WTC11 (cell line): ENCODE measurements at regions of chr2 and their contacts with region 1.

Region 1: DNA sequence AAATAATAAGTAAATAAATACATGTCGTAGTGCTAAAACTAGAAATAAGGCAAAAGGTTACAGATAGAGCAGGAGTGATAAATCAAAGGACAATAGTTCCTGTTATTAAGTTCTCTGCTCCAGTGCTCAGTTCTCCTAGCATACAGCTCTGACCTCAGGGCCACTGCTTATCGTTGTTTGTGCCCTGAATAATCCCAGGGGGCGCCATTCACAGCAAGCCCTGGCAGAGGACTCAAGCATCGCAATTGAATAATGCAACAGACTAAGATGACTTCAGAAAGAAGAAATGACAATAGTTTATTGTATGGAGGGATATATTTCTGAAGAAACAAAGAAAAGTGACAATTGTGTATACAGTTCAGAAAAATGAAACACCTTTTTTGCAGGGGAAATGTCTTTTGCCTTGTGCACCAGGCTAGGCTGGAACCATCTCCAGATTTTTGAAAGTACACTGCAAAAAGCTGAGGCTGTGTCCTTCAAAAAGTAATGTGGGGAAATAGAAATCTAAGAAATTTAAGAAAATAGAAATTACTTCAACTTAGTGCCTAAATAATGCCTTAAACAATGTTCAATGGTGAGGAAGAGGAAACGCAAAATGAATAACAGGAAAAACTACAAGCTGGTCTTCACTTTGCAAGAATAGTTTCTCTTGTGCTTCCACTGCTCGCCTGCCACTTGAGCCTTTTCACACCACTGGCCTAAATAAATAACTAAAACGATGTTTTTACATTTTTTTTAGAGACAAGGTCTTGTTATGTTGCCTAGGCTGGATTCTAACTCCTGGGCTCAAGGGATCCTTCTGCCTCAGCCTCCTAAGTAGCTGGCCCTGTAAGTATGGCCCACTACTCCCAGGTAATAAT is 19.0 kb upstream of the CCNYL1 start:
- DNase-seq: peak; percentile 55
- ATAC-seq: peak; percentile 95
- H3K4me3 Mint-ChIP-seq: no peak overlapping the region
- H3K27ac Mint-ChIP-seq: no peak overlapping the region
- H3K4me1 Mint-ChIP-seq: 0 out of 2 replicates have a peak, but pooled peaks cover 3% of the 10 kb centered on the region
- H3K27me3 Mint-ChIP-seq: no peaks in the 10 kb centered on the region
- CTCF ChIP-seq: peak; percentile 39; the same call in 1 of the 2 replicates

Region 2: DNA sequence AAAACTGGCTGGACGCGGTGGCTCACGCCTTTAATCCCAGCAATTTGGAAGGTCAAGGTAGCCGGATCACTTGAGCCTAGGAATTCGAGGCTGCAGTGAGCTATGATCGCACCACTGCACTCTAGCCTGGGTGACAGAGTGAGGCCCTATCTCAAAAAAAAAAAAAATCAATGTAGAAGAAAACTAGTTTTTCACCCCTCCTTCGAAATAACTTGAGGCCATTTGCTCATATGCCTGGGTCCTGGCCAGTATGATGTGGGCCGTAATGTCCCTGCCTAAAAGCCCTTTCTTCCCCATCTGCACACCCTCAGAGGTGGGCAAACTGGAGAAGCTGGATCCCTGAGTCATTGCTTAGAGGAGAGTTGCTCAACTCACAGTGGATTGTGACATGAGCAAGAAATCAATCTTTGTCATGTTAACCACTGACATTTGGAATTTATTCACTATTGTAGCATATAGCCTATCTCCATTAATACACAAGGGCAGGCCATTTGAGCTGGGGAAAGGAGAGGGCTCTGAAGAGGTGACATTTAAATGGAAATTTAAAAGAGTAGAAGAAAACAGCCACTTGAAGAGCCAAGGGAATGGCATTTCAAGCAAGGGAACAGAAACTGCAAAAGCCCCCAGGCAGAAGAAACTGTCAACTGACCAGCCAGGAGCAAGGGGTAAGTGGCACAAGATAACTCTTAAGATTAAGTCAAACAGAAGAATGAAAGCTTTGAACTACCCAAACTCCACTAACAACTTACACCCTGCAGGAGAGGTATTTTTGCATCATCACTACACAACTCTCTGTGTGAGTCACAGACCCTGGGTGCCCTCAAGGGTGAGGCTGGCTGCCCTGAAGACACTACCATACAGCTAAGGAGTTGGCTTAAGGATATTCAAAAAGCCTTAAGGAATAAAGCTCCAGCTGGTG is 59.6 kb before region 1 on chr2:
- CTCF ChIA-PET with region 1: interaction called, 39 read pairs
- POLR2A ChIA-PET with region 1: no interaction called
- DNase-seq: no peak
- ATAC-seq: peak; percentile 34; the same call in 1 of the 2 replicates
- H3K4me3 Mint-ChIP-seq: no peak overlapping the region
- H3K27ac Mint-ChIP-seq: peak overlapping the region; percentile 78; the same call in 1 of the 2 replicates
- H3K4me1 Mint-ChIP-seq: peaks cover 22% of the 10 kb centered on the region
- H3K27me3 Mint-ChIP-seq: no peaks in the 10 kb centered on the region
- CTCF ChIP-seq: no peak

Region 3: GRCh38 chr2:207704078-207704477 is 11.6 kb after region 1 on chr2:
- CTCF ChIA-PET with region 1: interaction called, 22 read pairs
- POLR2A ChIA-PET with region 1: no interaction called
- DNase-seq: no peak
- ATAC-seq: no peak
- H3K4me3 Mint-ChIP-seq: no peak overlapping the region
- H3K27ac Mint-ChIP-seq: no peak overlapping the region
- H3K4me1 Mint-ChIP-seq: peaks cover 9% of the 10 kb centered on the region
- H3K27me3 Mint-ChIP-seq: no peaks in the 10 kb centered on the region
- CTCF ChIP-seq: no peak

Region 4: GRCh38 chr2:207710814-207711740 is 18.6 kb after region 1 on chr2 and contains the start of gene CCNYL1:
- CTCF ChIA-PET with region 1: interaction called, 15 read pairs
- POLR2A ChIA-PET with region 1: interaction called, 4 read pairs
- DNase-seq: peak; percentile 99
- ATAC-seq: peak; percentile 98
- H3K4me3 Mint-ChIP-seq: peak within 1 kb of the TSS; percentile 99
- H3K27ac Mint-ChIP-seq: peak within 1 kb of the TSS; percentile 94
- H3K4me1 Mint-ChIP-seq: peaks cover 27% of the 10 kb centered on the region
- H3K27me3 Mint-ChIP-seq: no peaks in the 10 kb centered on the region
- CTCF ChIP-seq: no peak
- total RNA-seq, gene CCNYL1: 26.6 to 31.6 TPM (median 28.1 TPM) in 3 replicates

Region 5: GRCh38 chr2:207720517-207721208 is 28.2 kb after region 1 on chr2:
- CTCF ChIA-PET with region 1: interaction called, 13 read pairs
- POLR2A ChIA-PET with region 1: no interaction called
- DNase-seq: no peak
- ATAC-seq: no peak
- H3K4me3 Mint-ChIP-seq: no peak overlapping the region
- H3K27ac Mint-ChIP-seq: peak overlapping the region; percentile 75; the same call in 1 of the 2 replicates
- H3K4me1 Mint-ChIP-seq: peaks cover 11% of the 10 kb centered on the region
- H3K27me3 Mint-ChIP-seq: no peaks in the 10 kb centered on the region
- CTCF ChIP-seq: no peak

Region 6: GRCh38 chr2:207746131-207746530 is 53.7 kb after region 1 on chr2:
- CTCF ChIA-PET with region 1: interaction called, 10 read pairs
- POLR2A ChIA-PET with region 1: no interaction called
- DNase-seq: peak; percentile 55
- ATAC-seq: peak; percentile 82
- H3K4me3 Mint-ChIP-seq: no peak overlapping the region
- H3K27ac Mint-ChIP-seq: peak overlapping the region; percentile 31; the same call in 1 of the 2 replicates
- H3K4me1 Mint-ChIP-seq: peaks cover 16% of the 10 kb centered on the region
- H3K27me3 Mint-ChIP-seq: no peaks in the 10 kb centered on the region
- CTCF ChIP-seq: peak; percentile 83

Region 7: DNA sequence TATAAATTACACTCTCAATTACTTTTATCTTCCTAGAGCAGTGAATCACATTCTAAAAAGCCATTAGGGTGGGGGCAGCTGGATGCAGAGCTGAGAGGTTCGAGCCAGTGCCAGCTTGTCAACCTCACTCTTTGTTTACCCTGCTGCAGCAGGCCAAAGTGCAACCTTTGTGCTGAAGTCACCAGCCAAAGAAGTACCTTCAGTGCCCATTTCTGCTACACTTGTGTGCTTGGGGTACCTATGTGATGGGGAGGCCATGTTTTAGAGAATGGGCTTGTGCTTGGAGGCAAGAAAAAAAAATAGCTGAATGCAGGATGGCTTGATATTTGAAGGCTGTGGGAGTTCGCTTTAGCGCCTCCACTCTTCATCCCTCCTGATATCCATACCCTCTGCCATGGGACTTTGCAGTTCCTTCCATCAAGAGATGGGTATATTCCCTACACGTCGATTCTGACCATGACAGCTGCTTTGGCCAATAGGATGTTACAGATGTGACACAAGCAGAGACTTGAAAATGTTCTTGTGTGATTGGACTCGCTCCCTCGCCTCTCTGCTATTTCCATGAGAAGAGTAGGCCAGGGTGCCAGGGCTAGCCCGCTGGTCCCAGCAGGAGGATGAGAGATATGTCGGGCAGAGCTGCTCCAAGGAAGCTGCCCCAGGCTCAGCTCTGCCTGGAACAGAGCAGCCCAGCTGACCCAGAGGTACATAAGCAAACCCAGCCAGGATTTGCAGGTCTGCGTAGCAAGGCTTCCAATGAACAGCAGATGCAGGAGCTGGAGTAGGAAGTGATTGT is 90.0 kb after region 1 on chr2:
- CTCF ChIA-PET with region 1: no interaction called
- POLR2A ChIA-PET with region 1: no interaction called
- DNase-seq: no peak
- ATAC-seq: peak; percentile 18; the same call in 1 of the 2 replicates
- H3K4me3 Mint-ChIP-seq: no peak overlapping the region
- H3K27ac Mint-ChIP-seq: no peak overlapping the region
- H3K4me1 Mint-ChIP-seq: peaks cover 17% of the 10 kb centered on the region
- H3K27me3 Mint-ChIP-seq: peaks cover 10% of the 10 kb centered on the region
- CTCF ChIP-seq: no peak

Region 8: GRCh38 chr2:208118918-208119317 is 426.5 kb after region 1 on chr2:
- CTCF ChIA-PET with region 1: no interaction called
- POLR2A ChIA-PET with region 1: no interaction called
- DNase-seq: no peak
- ATAC-seq: no peak
- H3K4me3 Mint-ChIP-seq: no peak overlapping the region
- H3K27ac Mint-ChIP-seq: no peak overlapping the region
- H3K4me1 Mint-ChIP-seq: peaks cover 6% of the 10 kb centered on the region
- H3K27me3 Mint-ChIP-seq: no peaks in the 10 kb centered on the region; the same call in 1 of the 2 replicates
- CTCF ChIP-seq: no peak